SK-N-SH (cell line): ENCODE measurements at regions of chr12 and their contacts with region 1.

Region 1: GRCh38 chr12:89529738-89530137 is 3.9 kb upstream of the POC1B start:
- DNase-seq: peak; percentile 69
- H3K4me3 ChIP-seq: no peak overlapping the region; a peak in 1 of 4 replicates
- H3K27ac ChIP-seq: no peak overlapping the region
- H3K4me1 ChIP-seq: peaks cover 0 to 5% of the 10 kb centered on the region in 2 experiments; a peak in 2 of 4 replicates
- H3K27me3 ChIP-seq: no peaks in the 10 kb centered on the region
- CTCF ChIP-seq: peak; percentile 80
- EP300 ChIP-seq: no peak
- RAD21 ChIP-seq: peak; percentile 91

Region 2: DNA sequence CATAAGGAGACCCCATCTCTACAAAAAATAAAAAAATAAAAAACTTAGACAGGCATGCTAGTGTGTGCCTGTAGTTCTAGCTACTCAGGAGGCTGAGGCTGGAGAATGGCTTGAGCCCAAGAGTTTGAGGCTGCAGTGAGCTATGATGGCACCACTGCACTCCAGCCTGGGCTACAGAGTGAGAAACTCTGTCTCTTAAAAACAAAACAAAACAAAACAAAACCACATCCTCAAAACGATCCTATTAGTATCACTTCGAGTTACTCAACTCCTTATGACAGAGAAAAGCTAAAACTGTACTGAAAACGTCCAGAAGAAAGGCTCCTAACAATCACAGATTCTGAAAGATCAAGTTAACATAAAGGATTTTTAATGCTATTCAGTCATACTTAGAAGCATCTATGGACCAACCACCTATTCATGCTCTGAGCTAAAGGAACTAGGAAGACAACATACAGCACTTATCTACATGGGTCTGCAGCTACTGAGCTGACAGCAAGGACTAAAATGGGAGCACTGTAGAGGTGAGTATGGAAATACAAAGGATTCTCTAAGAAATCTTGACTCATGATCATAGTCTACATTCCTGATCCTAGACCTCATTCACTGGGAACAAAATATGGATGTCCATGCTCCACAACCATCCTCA is 102.1 kb before region 1 on chr12:
- CTCF ChIA-PET with region 1: no interaction called
- POLR2A ChIA-PET with region 1: no interaction called
- DNase-seq: no peak
- H3K4me3 ChIP-seq: no peak overlapping the region
- H3K27ac ChIP-seq: no peak overlapping the region
- H3K4me1 ChIP-seq: no peaks in the 10 kb centered on the region
- H3K27me3 ChIP-seq: no peaks in the 10 kb centered on the region
- CTCF ChIP-seq: no peak
- EP300 ChIP-seq: no peak
- RAD21 ChIP-seq: no peak

Region 3: GRCh38 chr12:89470741-89471509 is 58.8 kb before region 1 on chr12:
- CTCF ChIA-PET with region 1: interaction called, 50 read pairs
- POLR2A ChIA-PET with region 1: no interaction called
- DNase-seq: peak; percentile 29
- H3K4me3 ChIP-seq: no peak overlapping the region; a peak in 1 of 4 replicates
- H3K27ac ChIP-seq: no peak overlapping the region
- H3K4me1 ChIP-seq: peaks cover 2 to 6% of the 10 kb centered on the region in 2 experiments; a peak in 2 of 4 replicates
- H3K27me3 ChIP-seq: no peaks in the 10 kb centered on the region
- CTCF ChIP-seq: peak; percentile 77
- EP300 ChIP-seq: no peak
- RAD21 ChIP-seq: peak; percentile 80

Region 4: DNA sequence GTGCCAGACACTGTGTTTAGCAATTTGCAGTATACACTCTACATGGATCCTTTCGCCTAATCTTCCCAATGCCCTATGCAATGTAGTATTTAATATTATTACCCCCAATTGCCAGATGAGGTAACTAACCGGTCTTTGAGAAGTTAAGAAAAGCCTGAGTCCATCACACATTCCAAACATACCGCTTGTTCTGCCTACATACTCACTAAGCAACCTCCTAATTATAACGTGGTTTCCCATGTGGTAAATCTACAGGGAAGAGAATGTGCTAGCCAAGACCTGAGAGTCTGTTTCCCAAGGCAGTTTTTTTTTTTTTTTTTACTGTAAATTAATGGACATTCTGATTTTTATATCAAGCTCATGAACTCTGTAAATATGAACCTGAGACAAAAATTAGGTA is 141.7 kb after region 1 on chr12:
- CTCF ChIA-PET with region 1: no interaction called
- POLR2A ChIA-PET with region 1: no interaction called
- DNase-seq: no peak
- H3K4me3 ChIP-seq: no peak overlapping the region
- H3K27ac ChIP-seq: no peak overlapping the region
- H3K4me1 ChIP-seq: peaks cover 0 to 4% of the 10 kb centered on the region in 2 experiments; a peak in 1 of 4 replicates
- H3K27me3 ChIP-seq: no peaks in the 10 kb centered on the region
- CTCF ChIP-seq: no peak
- EP300 ChIP-seq: no peak
- RAD21 ChIP-seq: no peak

Region 5: GRCh38 chr12:89918181-89918868 is 388.6 kb after region 1 on chr12:
- CTCF ChIA-PET with region 1: no interaction called
- POLR2A ChIA-PET with region 1: no interaction called
- DNase-seq: no peak
- H3K4me3 ChIP-seq: no peak overlapping the region
- H3K27ac ChIP-seq: no peak overlapping the region
- H3K4me1 ChIP-seq: no peaks in the 10 kb centered on the region
- H3K27me3 ChIP-seq: no peaks in the 10 kb centered on the region
- CTCF ChIP-seq: no peak
- EP300 ChIP-seq: no peak
- RAD21 ChIP-seq: no peak